ENCODE measurements at regions of chr17 and their contacts with region 1.

Region 1: DNA sequence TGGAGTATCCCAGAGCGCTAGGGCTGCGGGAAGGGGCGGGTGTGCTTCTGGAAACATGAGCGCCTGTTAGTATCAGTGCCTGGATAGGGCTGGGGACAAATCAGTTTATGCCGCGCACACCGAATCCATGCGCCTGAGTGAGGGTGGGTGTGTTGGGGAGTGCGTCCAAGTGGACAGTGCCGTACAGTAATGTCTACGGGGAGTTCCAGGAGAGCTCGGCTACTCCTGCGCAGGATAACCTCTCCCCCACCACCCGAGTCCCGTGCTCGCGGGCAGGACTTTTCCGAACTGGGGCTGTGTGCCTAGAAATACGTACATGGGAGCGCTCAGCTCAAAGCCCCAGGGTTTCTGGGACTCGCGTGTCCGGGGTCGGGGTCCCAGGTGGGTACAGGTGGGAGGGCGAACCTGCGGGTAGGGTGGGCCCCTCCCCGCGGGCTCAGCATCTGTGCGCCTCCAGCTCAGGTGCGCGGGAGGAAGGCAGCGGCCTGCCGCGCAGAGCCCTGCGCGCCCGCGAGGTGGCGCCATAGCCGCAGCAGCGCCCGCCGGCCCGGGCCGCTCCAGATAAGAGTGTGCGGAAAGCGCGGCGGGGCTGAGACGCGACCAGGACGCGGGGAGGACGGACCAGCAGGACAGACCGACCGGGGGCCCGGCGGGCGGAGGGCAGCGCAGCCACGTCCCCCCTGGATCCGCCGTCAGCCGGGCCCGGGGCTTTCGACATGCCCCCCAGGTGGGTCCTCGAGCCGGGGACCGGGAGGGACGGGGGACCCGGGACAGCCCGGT is at the start of gene HIC1:
- DNase-seq: peak in 40 of 42 donors; percentile 26 to 84 (median 67)

Region 2: GRCh38 chr17:983921-984320 is 1070.8 kb before region 1 on chr17:
- intact Hi-C with region 1: no loop called
- DNase-seq: no peak

Region 3: GRCh38 chr17:2122641-2123302 is 68.1 kb after region 1 on chr17:
- intact Hi-C with region 1: no loop called
- DNase-seq: peak in 33 of 42 donors; percentile 13 to 67 (median 25)

Region 4: GRCh38 chr17:2244545-2245525 is 190.1 kb after region 1 on chr17:
- intact Hi-C with region 1: loop called (anchors 2 kb)
- DNase-seq: peak; percentile 77 to 94 (median 87)

Region 5: DNA sequence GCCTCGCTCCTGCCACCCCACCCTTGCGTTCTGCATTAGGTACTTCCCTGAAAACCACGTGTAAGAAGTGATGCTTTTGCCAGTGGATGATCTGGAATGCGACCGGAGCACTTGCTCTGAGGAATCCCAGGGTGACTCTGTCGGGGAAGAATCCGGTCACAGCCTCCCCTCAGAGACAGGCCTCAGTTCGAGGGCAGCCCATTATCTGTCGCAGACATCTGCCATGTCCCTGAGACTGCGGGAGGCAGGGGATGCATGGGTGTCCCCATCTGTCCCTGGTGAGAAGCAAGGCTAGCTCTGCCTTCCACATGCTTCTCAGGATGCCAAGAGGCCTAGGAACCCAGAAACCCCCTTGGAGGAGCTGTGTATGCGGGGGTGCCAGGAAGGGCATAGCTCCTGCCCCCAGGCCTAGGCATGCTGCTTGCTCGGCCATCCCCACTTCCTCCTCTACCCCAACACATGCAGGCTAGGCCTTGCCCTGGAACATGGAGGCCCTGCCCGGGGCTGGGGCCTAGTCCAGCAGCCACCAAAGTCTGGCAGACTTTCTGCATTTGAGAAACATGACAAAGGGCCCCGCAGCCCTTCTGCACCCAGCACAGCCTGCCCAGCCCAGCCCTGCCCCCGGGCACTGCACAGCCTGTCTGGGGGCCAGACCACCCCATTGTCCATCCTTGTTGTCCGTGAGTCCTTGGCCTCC is 325.7 kb after region 1 on chr17:
- intact Hi-C with region 1: no loop called
- DNase-seq: no peak